ENCODE measurements at regions of chr6 and their contacts with region 1.

Region 1: DNA sequence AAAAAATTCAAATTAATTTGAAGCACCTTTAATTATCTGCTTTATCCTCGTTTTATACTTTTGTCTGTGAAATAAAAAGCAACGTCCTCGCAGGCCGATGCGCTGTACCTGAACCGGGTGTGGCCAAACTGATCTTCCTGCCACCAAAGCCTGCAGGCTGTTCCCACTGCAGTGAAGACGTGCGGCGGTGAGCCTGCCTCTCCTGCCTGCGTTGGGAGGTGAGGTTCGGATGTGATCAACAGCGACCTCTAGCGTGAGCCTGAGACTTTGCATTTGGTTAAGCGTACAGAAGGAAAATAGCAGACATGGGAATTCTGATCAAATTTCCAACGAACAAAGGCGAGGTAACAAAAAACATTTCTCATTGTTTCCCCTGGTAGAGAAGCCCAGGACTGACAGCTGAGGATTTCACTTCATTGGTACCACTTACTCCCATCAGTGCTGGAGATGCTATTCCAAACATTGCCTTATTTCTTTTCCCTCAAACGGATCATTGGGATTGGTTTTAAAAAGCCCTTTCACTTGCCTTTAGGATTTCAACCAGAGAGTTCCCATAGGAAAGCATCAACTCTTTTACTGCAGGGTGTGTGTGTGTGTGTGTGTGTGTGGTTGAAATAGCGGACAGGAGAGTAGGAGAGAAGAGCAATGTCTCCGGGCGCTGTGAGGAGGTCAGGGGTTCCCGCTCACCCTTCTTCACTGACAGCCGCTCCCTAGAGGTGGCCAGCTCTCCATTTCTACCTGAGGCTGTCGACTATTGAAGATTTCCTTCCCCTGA is 56.6 kb upstream of the CCN6 start:
- DNase-seq: peak; percentile 60 to 82 (median 75)
- ATAC-seq: peak; percentile 89
- H3K4me3 ChIP-seq: peak overlapping the region; percentile 2
- H3K4me3 Mint-ChIP-seq: peak overlapping the region; percentile 58 to 91 (median 83)
- H3K27ac ChIP-seq: peak overlapping the region; percentile 55
- H3K27ac Mint-ChIP-seq: peak overlapping the region; percentile 44 to 97 (median 93)
- H3K4me1 ChIP-seq: peaks cover 19 to 45% of the 10 kb centered on the region in 2 donors
- H3K4me1 Mint-ChIP-seq: peaks cover 35 to 63% (median 50%) of the 10 kb centered on the region in 7 donors
- H3K27me3 ChIP-seq: no peaks in the 10 kb centered on the region
- H3K27me3 Mint-ChIP-seq: no peaks in the 10 kb centered on the region

Region 2: DNA sequence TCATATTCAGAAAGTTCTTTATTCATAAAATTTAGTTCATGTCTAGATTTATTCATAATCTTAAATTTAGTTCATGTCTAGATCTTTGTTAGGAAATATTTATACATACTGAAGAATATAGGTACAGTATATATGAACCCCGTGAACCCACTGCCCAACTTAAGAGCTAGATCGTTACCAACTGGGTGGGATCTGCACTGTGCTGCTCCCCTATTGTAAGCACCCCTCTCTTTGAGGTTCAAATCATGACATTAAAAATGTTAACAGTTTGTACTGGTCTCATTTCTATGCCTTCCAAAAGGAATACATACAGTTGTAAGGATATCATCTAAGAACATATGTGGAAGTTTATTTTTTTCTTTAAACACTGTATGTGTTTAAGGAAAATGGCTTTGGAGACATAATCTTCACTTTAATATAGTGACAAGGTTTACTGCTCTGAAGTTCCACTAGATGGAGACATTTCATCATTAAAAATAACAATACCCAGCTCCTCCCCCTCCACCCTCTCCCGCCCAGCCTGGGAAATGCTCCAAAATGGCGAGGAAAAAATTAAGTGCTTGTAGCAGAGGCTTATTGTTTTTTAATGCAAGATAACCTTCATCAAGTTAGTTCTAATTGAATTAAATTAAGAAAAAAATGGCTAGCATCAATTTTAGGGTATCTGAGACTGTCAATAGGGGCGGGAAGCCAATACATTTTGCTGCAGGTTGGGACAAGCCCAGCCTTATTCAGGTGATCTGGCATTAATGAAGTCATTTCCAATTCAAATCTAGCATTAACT is 287.5 kb before region 1 on chr6:
- CTCF ChIA-PET with region 1: interaction called, 26 read pairs
- POLR2A ChIA-PET with region 1: interaction called, 11 read pairs
- intact Hi-C with region 1: loop called (anchors 1 kb)
- DNase-seq: peak in 8 of 9 donors; percentile 43 to 78 (median 71)
- ATAC-seq: peak; percentile 89
- H3K4me3 ChIP-seq: no peak overlapping the region
- H3K4me3 Mint-ChIP-seq: peak overlapping the region in 8 of 10 donors; percentile 2 to 67 (median 53)
- H3K27ac ChIP-seq: peak overlapping the region; percentile 59
- H3K27ac Mint-ChIP-seq: peak overlapping the region; percentile 53 to 98 (median 93)
- H3K4me1 ChIP-seq: peaks cover 32 to 43% of the 10 kb centered on the region in 2 donors
- H3K4me1 Mint-ChIP-seq: peaks cover 32 to 64% (median 56%) of the 10 kb centered on the region in 7 donors
- H3K27me3 ChIP-seq: no peaks in the 10 kb centered on the region
- H3K27me3 Mint-ChIP-seq: no peaks in the 10 kb centered on the region

Region 3: DNA sequence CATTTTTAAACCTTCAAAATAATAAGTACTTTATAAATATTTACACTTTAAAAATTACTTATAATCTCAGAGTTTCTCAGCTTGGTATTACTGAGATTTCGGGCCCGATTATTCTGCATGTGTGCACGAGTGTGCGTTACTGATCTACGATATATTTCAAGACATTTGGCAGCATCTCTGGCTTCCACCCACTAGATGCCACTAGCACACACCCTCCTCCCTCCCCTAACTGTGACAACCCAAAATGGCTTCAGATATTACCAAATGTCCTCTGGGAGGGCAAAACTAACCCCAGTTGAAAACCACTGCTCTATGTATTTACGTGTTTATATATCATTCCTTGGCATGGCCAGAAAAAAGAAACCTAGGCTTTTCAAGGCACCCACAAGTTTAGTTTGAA is 219.9 kb before region 1 on chr6:
- CTCF ChIA-PET with region 1: interaction called, 6 read pairs
- POLR2A ChIA-PET with region 1: no interaction called
- intact Hi-C with region 1: loop called in 1 of 2 experiments (anchors 1 kb)
- DNase-seq: peak in 1 of 9 donors; percentile 36
- ATAC-seq: peak; percentile 73
- H3K4me3 ChIP-seq: no peak overlapping the region
- H3K4me3 Mint-ChIP-seq: peak overlapping the region in 2 of 10 donors; percentile 26 to 40
- H3K27ac ChIP-seq: peak overlapping the region; percentile 56
- H3K27ac Mint-ChIP-seq: peak overlapping the region; percentile 2 to 93 (median 81)
- H3K4me1 ChIP-seq: peaks cover 71 to 85% of the 10 kb centered on the region in 2 donors
- H3K4me1 Mint-ChIP-seq: peaks cover 46 to 97% (median 89%) of the 10 kb centered on the region in 7 donors
- H3K27me3 ChIP-seq: no peaks in the 10 kb centered on the region
- H3K27me3 Mint-ChIP-seq: no peaks in the 10 kb centered on the region

Region 4: GRCh38 chr6:111841822-111842221 is 155.4 kb before region 1 on chr6:
- CTCF ChIA-PET with region 1: no interaction called
- POLR2A ChIA-PET with region 1: interaction called, 6 read pairs
- intact Hi-C with region 1: loop called (anchors 2 to 10 kb)
- DNase-seq: peak in 7 of 9 donors; percentile 38 to 63 (median 61)
- ATAC-seq: no peak
- H3K4me3 ChIP-seq: no peak overlapping the region
- H3K4me3 Mint-ChIP-seq: no peak overlapping the region
- H3K27ac ChIP-seq: peak overlapping the region; percentile 62
- H3K27ac Mint-ChIP-seq: no peak overlapping the region
- H3K4me1 ChIP-seq: peaks cover 98 to 100% of the 10 kb centered on the region in 2 donors
- H3K4me1 Mint-ChIP-seq: peaks cover 0 to 55% (median 0%) of the 10 kb centered on the region in 7 donors
- H3K27me3 ChIP-seq: no peaks in the 10 kb centered on the region
- H3K27me3 Mint-ChIP-seq: no peaks in the 10 kb centered on the region

Region 5: DNA sequence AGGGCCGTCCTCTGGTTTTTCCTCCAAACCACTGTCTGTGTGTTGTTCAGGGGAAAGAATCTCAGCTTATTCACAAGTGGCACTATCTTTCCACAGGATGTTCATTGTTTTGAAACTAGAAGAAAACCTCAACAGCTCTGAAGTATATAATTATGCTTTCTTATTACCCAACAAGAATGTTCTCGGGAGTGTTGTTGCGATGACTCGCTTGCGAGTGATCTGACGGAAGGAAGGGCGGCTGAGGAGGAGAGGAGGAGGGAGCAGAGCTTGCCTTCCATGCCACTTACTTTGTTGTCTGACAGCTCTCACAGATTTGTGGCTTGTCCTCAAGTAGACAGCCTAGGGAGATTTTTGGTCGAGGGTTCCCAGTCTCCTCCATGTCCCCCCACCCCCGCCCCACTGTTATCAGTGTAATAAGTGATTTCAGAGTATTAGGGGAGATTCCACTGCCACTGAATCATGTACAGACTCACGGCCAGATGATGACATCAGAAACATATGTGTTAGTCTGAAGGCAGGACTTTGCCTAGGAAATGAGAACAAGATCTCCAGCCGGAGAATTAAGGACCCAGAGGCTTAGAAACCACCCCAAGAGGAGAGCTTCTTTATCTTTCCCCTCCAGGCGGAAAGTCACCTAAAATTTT is 24.0 kb before region 1 on chr6:
- CTCF ChIA-PET with region 1: interaction called, 19 read pairs
- POLR2A ChIA-PET with region 1: interaction called, 48 read pairs
- intact Hi-C with region 1: loop called (anchors 1 to 2 kb)
- DNase-seq: peak; percentile 41 to 92 (median 88)
- ATAC-seq: peak; percentile 90
- H3K4me3 ChIP-seq: peak overlapping the region; percentile 17
- H3K4me3 Mint-ChIP-seq: peak overlapping the region; percentile 55 to 82 (median 67)
- H3K27ac ChIP-seq: peak overlapping the region; percentile 95
- H3K27ac Mint-ChIP-seq: peak overlapping the region; percentile 84 to 99 (median 96)
- H3K4me1 ChIP-seq: peaks cover 7 to 77% of the 10 kb centered on the region in 2 donors
- H3K4me1 Mint-ChIP-seq: peaks cover 37 to 95% (median 82%) of the 10 kb centered on the region in 7 donors
- H3K27me3 ChIP-seq: no peaks in the 10 kb centered on the region
- H3K27me3 Mint-ChIP-seq: peaks cover 0 to 10% (median 0%) of the 10 kb centered on the region in 5 donors

Region 6: GRCh38 chr6:112010328-112010727 is 13.1 kb after region 1 on chr6:
- CTCF ChIA-PET with region 1: interaction called, 27 read pairs
- POLR2A ChIA-PET with region 1: interaction called, 4 read pairs
- intact Hi-C with region 1: no loop called
- DNase-seq: peak in 5 of 9 donors; percentile 37 to 57 (median 45)
- ATAC-seq: peak; percentile 56
- H3K4me3 ChIP-seq: no peak overlapping the region
- H3K4me3 Mint-ChIP-seq: peak overlapping the region in 1 of 10 donors; percentile 9
- H3K27ac ChIP-seq: no peak overlapping the region
- H3K27ac Mint-ChIP-seq: peak overlapping the region in 7 of 9 donors; percentile 0 to 41 (median 7)
- H3K4me1 ChIP-seq: no peaks in the 10 kb centered on the region
- H3K4me1 Mint-ChIP-seq: peaks cover 6 to 22% (median 14%) of the 10 kb centered on the region in 7 donors
- H3K27me3 ChIP-seq: no peaks in the 10 kb centered on the region
- H3K27me3 Mint-ChIP-seq: no peaks in the 10 kb centered on the region

Measured in naive thymus-derived CD4-positive, alpha-beta T cell (primary cell).